ENCODE measurements at regions of chr2 and their contacts with region 1.

Region 1: DNA sequence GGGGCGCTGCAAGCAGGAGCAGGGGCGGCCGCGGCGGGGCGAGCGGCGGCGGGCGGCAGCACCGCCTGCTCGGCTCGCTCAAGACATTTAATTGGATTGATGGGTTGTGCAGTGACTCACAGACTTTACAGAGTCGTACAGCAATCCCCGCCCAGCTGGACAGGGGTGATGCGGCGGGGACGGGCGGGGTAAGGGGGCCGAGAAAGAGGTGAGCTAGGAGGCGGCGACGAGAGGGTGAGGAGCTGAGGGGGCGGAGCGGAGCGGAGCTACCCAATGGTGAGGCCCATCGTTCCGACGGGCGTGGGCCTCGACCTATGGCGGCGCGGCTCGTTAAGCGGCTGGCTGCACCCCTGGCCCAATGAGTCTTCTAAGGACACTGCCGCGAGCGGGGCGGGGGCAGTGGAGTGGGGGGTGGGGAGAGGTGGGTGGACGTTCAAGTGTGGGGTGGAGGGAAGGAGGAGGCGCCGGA is 97.1 kb upstream of the SERTAD2 start:
- DNase-seq: peak; percentile 97
- H3K4me3 ChIP-seq: peak overlapping the region; percentile 65 to 86 (median 82)
- H3K27ac ChIP-seq: peak overlapping the region; percentile 98 to 100 (median 99)
- H3K4me1 ChIP-seq: peaks cover 4 to 61% (median 29%) of the 10 kb centered on the region in 3 donors
- H3K27me3 ChIP-seq: no peaks in the 10 kb centered on the region
- CTCF ChIP-seq: peak in 1 of 6 experiments; percentile 18
- POLR2A ChIP-seq: peak in 3 of 4 donors; percentile 94 to 99 (median 98)

Region 2: DNA sequence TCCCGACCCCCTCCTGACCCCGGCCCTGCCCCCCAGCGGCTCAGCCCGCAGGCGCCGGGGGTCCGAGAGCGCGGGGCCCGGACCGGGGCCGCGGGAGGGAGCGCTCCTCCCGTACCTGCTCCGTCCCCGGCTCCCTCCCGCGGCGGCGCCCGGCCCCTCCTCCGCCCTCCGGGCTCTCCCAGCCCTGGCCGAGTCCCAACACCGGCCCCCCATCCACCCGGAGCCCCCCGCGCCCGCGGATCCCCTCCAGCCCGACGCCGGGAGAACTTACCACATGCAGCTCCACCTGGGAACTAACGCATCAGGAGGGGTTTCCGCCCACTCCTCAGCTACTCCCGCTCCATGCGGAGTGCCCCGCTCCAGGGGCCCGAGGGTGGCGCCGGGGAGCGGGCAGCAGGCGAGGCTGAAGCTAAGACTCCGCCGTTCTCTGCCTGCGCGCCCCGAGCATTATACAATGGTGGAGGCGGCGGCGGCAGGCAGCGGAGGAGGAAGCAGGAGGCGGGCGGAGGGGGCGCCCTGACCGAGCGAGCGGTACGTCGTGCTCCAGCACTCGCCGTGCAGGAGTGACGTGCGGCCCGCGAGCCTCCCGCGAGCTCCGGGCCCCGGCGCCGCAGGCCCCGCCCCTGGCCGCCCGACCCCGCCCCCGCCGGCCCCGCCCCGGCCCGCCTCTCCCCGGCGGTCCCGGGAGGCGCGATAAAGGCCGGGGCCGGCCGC is 97.3 kb before region 1 on chr2 and contains the start of gene SERTAD2:
- intact Hi-C with region 1: loop called (anchors 5 kb)
- DNase-seq: peak; percentile 53
- H3K4me3 ChIP-seq: peak within 1 kb of the TSS; percentile 90 to 98 (median 97)
- H3K27ac ChIP-seq: peak within 1 kb of the TSS; percentile 100
- H3K4me1 ChIP-seq: peaks cover 15 to 59% (median 36%) of the 10 kb centered on the region in 3 donors
- H3K27me3 ChIP-seq: no peaks in the 10 kb centered on the region
- CTCF ChIP-seq: peak in 4 of 6 experiments; percentile 1 to 33 (median 12)
- POLR2A ChIP-seq: peak in 3 of 4 donors; percentile 59 to 95 (median 89)
- total RNA-seq, gene SERTAD2: 19.5 to 54.0 (median 20.8) TPM

Region 3: DNA sequence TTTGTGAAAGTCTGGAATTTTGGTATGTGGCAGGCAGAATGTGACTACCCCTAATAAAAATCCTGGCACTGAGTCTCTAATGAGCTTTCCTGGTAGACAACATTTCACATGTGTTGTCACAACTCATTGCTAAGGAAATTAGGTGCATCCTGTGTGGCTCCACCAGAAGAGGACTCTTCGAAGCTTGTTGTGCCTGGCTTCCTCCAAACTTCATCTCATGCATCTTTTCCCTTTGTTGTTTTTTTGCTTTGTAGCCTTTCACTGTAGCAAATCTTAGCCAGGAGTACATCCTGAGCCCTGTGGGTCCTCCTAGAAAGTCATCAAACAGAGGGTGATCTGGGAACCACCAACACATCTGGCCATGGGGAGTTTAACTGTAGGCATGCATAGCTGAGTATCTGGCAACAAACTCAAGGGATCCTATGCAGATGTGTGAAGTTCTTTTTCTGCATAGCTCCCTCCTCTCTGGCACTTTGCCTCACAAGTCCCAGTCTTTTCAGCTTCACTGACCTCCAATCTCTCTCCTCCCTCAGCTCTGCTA is 55.1 kb before region 1 on chr2:
- intact Hi-C with region 1: no loop called
- DNase-seq: no peak
- H3K4me3 ChIP-seq: no peak overlapping the region
- H3K27ac ChIP-seq: no peak overlapping the region
- H3K4me1 ChIP-seq: peaks cover 0 to 19% (median 0%) of the 10 kb centered on the region in 3 donors
- H3K27me3 ChIP-seq: no peaks in the 10 kb centered on the region
- CTCF ChIP-seq: no peak
- POLR2A ChIP-seq: no peak

Region 4: GRCh38 chr2:64865073-64865830 is 114.4 kb after region 1 on chr2:
- intact Hi-C with region 1: loop called (anchors 10 kb)
- DNase-seq: no peak
- H3K4me3 ChIP-seq: peak overlapping the region; percentile 40 to 83 (median 61)
- H3K27ac ChIP-seq: peak overlapping the region; percentile 91 to 96 (median 91)
- H3K4me1 ChIP-seq: peaks cover 11 to 69% (median 24%) of the 10 kb centered on the region in 3 donors
- H3K27me3 ChIP-seq: no peaks in the 10 kb centered on the region
- CTCF ChIP-seq: peak in 5 of 6 experiments; percentile 38 to 100 (median 99)
- POLR2A ChIP-seq: no peak